SK-N-SH (cell line): ENCODE measurements at regions of chr2 and their contacts with region 1.

Region 1: GRCh38 chr2:70767699-70768589 is at the start of gene ADD2:
- DNase-seq: peak; percentile 93
- H3K4me3 ChIP-seq: peak within 1 kb of the TSS; percentile 50 to 52
- H3K27ac ChIP-seq: peak within 1 kb of the TSS in 1 of 2 experiments; percentile 73; a peak in 2 of 4 replicates
- H3K4me1 ChIP-seq: peaks cover 0 to 10% of the 10 kb centered on the region in 2 experiments; a peak in 2 of 4 replicates
- H3K27me3 ChIP-seq: peaks cover 25% of the 10 kb centered on the region
- CTCF ChIP-seq: peak; percentile 38
- EP300 ChIP-seq: no peak
- RAD21 ChIP-seq: no peak
- polyA plus RNA-seq, gene ADD2: 0.30 and 0.50 TPM in 2 replicates

Region 2: GRCh38 chr2:70647873-70648481 is 120.0 kb before region 1 on chr2:
- CTCF ChIA-PET with region 1: interaction called, 10 read pairs
- POLR2A ChIA-PET with region 1: no interaction called
- DNase-seq: peak; percentile 73
- H3K4me3 ChIP-seq: peak overlapping the region in 1 of 2 experiments; percentile 47; a peak in 1 of 4 replicates
- H3K27ac ChIP-seq: no peak overlapping the region
- H3K4me1 ChIP-seq: no peaks in the 10 kb centered on the region
- H3K27me3 ChIP-seq: 0 out of 2 replicates have a peak, but pooled peaks cover 6% of the 10 kb centered on the region
- CTCF ChIP-seq: peak; percentile 93
- EP300 ChIP-seq: no peak
- RAD21 ChIP-seq: peak; percentile 91

Region 3: GRCh38 chr2:70656421-70657010 is 111.4 kb before region 1 on chr2:
- CTCF ChIA-PET with region 1: interaction called, 27 read pairs
- POLR2A ChIA-PET with region 1: interaction called, 4 read pairs
- DNase-seq: no peak
- H3K4me3 ChIP-seq: no peak overlapping the region
- H3K27ac ChIP-seq: no peak overlapping the region
- H3K4me1 ChIP-seq: no peaks in the 10 kb centered on the region
- H3K27me3 ChIP-seq: peaks cover 16% of the 10 kb centered on the region; the same call in 1 of the 2 replicates
- CTCF ChIP-seq: no peak
- EP300 ChIP-seq: no peak
- RAD21 ChIP-seq: no peak

Region 4: GRCh38 chr2:70686577-70687460 is 81.1 kb before region 1 on chr2:
- CTCF ChIA-PET with region 1: interaction called, 13 read pairs
- POLR2A ChIA-PET with region 1: no interaction called
- DNase-seq: peak; percentile 57
- H3K4me3 ChIP-seq: no peak overlapping the region; a peak in 1 of 4 replicates
- H3K27ac ChIP-seq: no peak overlapping the region
- H3K4me1 ChIP-seq: peaks cover 0 to 2% of the 10 kb centered on the region in 2 experiments; a peak in 2 of 4 replicates
- H3K27me3 ChIP-seq: no peaks in the 10 kb centered on the region
- CTCF ChIP-seq: peak; percentile 53
- EP300 ChIP-seq: no peak
- RAD21 ChIP-seq: no peak

Region 5: DNA sequence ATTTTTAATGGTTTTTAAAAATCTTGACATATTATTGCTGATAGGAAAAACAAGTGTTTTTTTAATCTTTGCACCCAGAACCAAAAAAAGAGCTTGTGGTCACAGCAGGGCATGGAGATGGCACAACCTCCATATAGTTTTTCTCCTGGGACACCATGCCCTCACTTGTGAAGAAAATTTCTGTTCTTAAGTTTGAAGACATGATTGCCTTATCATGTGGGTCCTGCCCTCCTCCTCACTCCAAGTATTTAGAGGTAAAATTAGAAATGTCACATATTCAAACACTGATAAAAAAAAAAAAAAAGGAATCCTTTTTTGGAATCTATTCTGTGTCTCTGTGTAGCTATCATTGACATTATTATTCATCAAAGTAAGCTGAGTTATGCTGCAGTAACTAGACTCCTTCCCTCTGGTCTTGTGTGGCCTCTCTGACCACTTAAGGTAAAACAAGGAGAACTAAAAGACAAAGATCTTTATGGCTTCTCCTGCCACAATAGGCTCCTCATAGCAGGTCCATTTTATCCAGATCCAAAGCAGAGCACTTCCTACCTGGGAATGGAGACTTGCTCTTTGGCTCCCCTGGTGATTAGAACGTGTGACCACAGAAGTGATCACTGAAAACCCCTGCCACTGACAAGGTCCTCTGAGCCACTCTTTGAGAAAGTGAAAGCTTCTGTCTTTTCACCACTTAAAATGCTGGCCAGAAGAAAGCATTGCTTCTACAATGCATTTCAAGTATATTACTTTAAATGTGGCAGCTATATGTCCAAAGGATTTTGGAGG is 19.8 kb before region 1 on chr2:
- CTCF ChIA-PET with region 1: interaction called, 12 read pairs
- POLR2A ChIA-PET with region 1: interaction called, 4 read pairs
- DNase-seq: no peak
- H3K4me3 ChIP-seq: no peak overlapping the region
- H3K27ac ChIP-seq: no peak overlapping the region
- H3K4me1 ChIP-seq: no peaks in the 10 kb centered on the region
- H3K27me3 ChIP-seq: no peaks in the 10 kb centered on the region
- CTCF ChIP-seq: no peak
- EP300 ChIP-seq: no peak
- RAD21 ChIP-seq: no peak

Region 6: GRCh38 chr2:70779911-70780545 is 12.1 kb after region 1 on chr2:
- CTCF ChIA-PET with region 1: interaction called, 36 read pairs
- POLR2A ChIA-PET with region 1: no interaction called
- DNase-seq: no peak
- H3K4me3 ChIP-seq: no peak overlapping the region
- H3K27ac ChIP-seq: no peak overlapping the region
- H3K4me1 ChIP-seq: no peaks in the 10 kb centered on the region
- H3K27me3 ChIP-seq: peaks cover 4% of the 10 kb centered on the region; the same call in 1 of the 2 replicates
- CTCF ChIP-seq: no peak
- EP300 ChIP-seq: no peak
- RAD21 ChIP-seq: no peak

Region 7: DNA sequence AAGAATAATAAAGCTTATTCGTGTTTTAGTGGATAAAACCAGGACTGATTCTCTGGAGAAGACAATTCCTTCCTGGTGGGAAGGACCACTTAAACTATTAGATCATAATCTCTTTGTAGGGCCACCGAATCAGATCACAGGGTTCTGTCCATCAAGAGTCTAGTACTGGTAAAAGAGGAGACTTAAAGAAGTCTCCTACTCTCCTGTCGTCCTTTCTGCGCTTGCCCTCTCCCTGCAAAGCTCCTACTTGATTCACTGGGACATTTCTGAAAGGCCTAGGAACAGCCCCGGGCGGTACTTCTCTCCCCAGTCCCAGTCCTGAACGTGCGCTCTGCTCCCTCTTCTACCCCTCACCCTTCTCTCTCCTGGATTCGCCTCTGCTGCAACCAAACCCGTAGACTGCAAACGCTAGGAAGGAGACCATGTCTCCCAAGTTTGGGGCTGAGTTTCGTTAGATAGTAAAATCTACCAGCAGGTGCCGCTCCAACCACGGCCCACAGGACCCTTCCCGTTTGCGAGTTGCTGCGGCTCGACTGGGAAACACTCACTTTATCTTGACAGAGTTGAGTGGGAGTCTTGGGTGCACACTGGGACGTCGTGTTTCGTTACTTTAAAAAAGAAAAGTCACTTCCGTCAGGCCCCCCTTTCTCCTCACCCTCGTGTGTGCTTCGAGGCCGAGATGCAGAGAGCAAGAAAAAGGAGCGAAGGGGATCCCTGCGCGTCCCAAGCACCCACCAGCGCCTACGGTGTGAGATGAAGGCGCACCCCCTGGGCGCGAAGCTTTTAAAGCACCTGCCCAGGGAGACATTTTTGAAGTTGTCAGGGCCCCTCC is 21.6 kb after region 1 on chr2:
- CTCF ChIA-PET with region 1: interaction called, 40 read pairs
- POLR2A ChIA-PET with region 1: no interaction called
- DNase-seq: peak; percentile 81
- H3K4me3 ChIP-seq: peak overlapping the region; percentile 26 to 55
- H3K27ac ChIP-seq: no peak overlapping the region
- H3K4me1 ChIP-seq: peaks cover 0 to 9% of the 10 kb centered on the region in 2 experiments; a peak in 1 of 4 replicates
- H3K27me3 ChIP-seq: peaks cover 44% of the 10 kb centered on the region
- CTCF ChIP-seq: peak; percentile 69
- EP300 ChIP-seq: no peak
- RAD21 ChIP-seq: peak; percentile 83

Region 8: GRCh38 chr2:70994756-70995729 is 227.1 kb after region 1 on chr2 and contains the start of gene TEX261:
- CTCF ChIA-PET with region 1: no interaction called
- POLR2A ChIA-PET with region 1: no interaction called
- DNase-seq: peak; percentile 98
- H3K4me3 ChIP-seq: peak within 1 kb of the TSS; percentile 75 to 91
- H3K27ac ChIP-seq: peak within 1 kb of the TSS in 1 of 2 experiments; percentile 66; a peak in 1 of 4 replicates
- H3K4me1 ChIP-seq: peaks cover 9 to 14% of the 10 kb centered on the region in 2 experiments; a peak in 1 of 4 replicates
- H3K27me3 ChIP-seq: no peaks in the 10 kb centered on the region
- CTCF ChIP-seq: peak; percentile 63
- EP300 ChIP-seq: peak in 1 of 2 experiments; percentile 3; a peak in 1 of 4 replicates
- RAD21 ChIP-seq: no peak
- polyA plus RNA-seq, gene TEX261: 44.3 and 58.7 TPM in 2 replicates